ENCODE measurements at regions of chr16 and their contacts with region 1.

Region 1: DNA sequence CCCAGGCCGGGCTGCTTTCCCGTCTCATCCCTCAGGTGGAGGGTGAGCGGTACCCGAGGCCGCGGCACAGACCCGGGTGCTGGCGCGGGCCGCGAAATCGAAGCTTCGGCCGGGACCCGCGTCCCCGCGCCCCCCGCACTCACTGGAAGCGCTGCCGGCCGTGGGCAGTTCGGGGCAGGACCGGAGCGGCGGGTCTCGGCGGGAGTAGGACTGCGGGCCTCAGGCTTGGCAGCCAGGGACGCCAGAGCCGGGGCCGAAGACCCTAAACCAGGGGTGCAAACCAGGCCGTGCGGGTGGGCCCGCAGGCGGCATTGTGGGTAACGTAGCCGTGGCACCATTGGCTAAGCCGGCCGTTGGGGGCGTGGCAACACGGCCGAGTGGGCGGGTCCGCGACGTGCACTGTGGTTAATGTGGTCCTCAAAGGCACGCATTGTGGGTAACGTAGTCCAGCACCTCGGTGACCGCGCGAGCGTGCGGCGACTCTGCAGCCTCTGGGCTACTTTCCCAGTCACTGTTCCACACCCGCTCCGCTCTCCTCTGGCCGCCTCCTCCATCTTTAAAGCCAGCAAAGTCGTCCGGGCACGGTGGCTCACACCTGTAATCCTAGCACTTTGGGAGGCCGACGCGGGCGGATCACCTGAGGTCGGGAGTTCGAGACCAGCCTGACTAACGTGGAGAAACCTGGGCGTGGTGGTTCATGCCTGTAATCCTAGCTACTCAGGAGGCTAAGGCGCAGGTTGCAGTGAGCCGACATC is at the start of gene ZNF500:
- DNase-seq: peak; percentile 95
- H3K4me3 Mint-ChIP-seq: peak within 1 kb of the TSS; percentile 88
- H3K27ac Mint-ChIP-seq: peak within 1 kb of the TSS; percentile 84
- H3K4me1 Mint-ChIP-seq: peaks cover 13% of the 10 kb centered on the region
- H3K27me3 Mint-ChIP-seq: no peaks in the 10 kb centered on the region
- total RNA-seq, gene ZNF500: 16.6 and 18.1 TPM in 2 replicates

Region 2: GRCh38 chr16:4624015-4624826 is 142.8 kb before region 1 on chr16 and contains the start of gene MGRN1:
- intact Hi-C with region 1: loop called (anchors 2 kb)
- DNase-seq: peak; percentile 91
- H3K4me3 Mint-ChIP-seq: peak within 1 kb of the TSS; percentile 95
- H3K27ac Mint-ChIP-seq: peak within 1 kb of the TSS; percentile 97
- H3K4me1 Mint-ChIP-seq: peaks cover 25% of the 10 kb centered on the region
- H3K27me3 Mint-ChIP-seq: no peaks in the 10 kb centered on the region
- total RNA-seq, gene MGRN1: 124 TPM in 2 replicates

Region 3: DNA sequence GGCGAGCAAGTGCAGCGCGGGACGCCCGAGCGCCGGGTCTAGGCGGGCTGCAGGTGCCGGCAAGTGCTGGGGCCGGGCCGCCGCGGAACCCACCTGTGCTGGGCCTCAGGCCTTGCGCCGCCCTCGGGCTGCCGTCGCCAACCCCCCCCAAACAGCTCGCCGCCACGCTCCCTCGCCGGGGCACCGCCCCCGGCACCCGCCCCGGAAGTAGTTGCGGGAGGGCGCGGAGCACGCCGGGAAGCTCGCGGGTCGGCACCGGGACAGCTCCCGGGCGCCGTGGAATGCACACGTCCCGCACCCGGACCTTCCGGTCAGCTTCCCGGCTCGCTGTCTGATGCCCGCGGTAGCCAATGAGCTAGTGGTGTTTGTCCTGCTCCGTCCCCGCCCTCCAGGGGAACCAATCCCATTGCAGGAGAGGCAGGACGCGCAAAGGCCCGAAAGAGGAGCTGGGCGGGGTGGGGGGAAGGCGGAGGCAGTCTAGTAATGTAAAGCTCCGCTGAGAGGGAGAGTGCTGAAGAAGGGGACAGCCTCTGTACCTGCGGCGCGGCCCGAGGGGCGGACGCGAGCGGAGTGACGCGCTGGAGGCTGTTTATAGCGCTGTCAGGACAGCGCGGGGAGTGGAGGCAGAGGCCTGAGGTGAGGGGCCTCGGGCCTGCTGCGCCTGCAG is 32.9 kb before region 1 on chr16 and contains the starts of genes ANKS3 and DNAAF8:
- intact Hi-C with region 1: loop called (anchors 1 kb)
- DNase-seq: peak; percentile 76
- H3K4me3 Mint-ChIP-seq: peak within 1 kb of the TSS; percentile 85
- H3K27ac Mint-ChIP-seq: peak within 1 kb of the TSS; percentile 69
- H3K4me1 Mint-ChIP-seq: peaks cover 12% of the 10 kb centered on the region
- H3K27me3 Mint-ChIP-seq: no peaks in the 10 kb centered on the region
- total RNA-seq, gene ANKS3: 18.6 and 20.6 TPM in 2 replicates
- total RNA-seq, gene DNAAF8: 0.11 TPM in 1 of 2 replicates, not detected in the other

Region 4: DNA sequence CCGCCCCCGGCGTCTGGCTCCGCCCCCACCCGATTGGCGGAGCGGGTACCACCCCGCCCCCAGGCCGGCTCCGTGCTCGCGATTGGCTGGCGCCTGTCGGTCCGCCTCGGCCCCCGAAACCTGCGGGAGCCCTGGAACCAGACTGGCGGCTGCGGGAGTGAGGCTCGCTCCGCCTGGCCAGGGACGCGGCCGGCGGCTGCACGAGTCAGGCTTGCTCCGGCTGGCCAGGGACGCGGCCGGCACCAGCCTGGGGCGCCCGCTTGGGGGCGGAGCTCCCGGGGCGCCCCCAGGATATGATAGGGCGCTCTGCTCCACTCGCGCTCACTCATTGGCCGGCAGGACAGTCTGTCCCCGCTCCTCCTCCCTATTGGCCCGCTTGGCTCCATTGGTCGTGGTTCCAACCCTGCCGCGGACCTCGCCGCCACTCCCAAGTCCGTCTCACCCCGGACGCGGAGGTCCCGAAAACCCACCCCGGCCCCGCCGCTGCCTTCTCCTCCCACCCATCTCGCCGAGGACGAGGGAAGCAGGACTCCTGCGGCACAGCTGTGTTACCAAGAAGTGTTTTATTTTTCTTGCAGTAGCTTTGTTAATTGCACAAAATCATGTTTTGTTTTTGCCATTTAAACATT is 35.7 kb after region 1 on chr16:
- intact Hi-C with region 1: loop called (anchors 1 kb)
- DNase-seq: peak; percentile 88
- H3K4me3 Mint-ChIP-seq: peak overlapping the region; percentile 81
- H3K27ac Mint-ChIP-seq: peak overlapping the region; percentile 38
- H3K4me1 Mint-ChIP-seq: peaks cover 5% of the 10 kb centered on the region
- H3K27me3 Mint-ChIP-seq: no peaks in the 10 kb centered on the region

Region 5: GRCh38 chr16:4862639-4863038 is 95.6 kb after region 1 on chr16:
- intact Hi-C with region 1: no loop called
- DNase-seq: no peak
- H3K4me3 Mint-ChIP-seq: no peak overlapping the region
- H3K27ac Mint-ChIP-seq: peak overlapping the region; percentile 11
- H3K4me1 Mint-ChIP-seq: peaks cover 6% of the 10 kb centered on the region
- H3K27me3 Mint-ChIP-seq: no peaks in the 10 kb centered on the region

Region 6: GRCh38 chr16:4957720-4958509 is 190.9 kb after region 1 on chr16 and contains the start of gene SEC14L5:
- intact Hi-C with region 1: loop called (anchors 5 kb)
- DNase-seq: peak; percentile 89
- H3K4me3 Mint-ChIP-seq: peak within 1 kb of the TSS; percentile 82
- H3K27ac Mint-ChIP-seq: no peak within 1 kb of the TSS
- H3K4me1 Mint-ChIP-seq: peaks cover 13% of the 10 kb centered on the region
- H3K27me3 Mint-ChIP-seq: peaks cover 13% of the 10 kb centered on the region
- total RNA-seq, gene SEC14L5: not detected in 2 replicates

Measured in activated T-helper 2 cell treated with anti-CD3 and anti-CD28 coated beads, Interferon-gamma antibody, Interleukin-2, Interleukin-4, amounts not matched to agents 10 μg/mL and 5 μg/mL and 100 μg/mL, durations not matched to agents 14 hours and 24 hours and 36 hours (primary cell).